Natural killer cell (primary cell): ENCODE measurements at regions of chr22 and their contacts with region 1.

Region 1: DNA sequence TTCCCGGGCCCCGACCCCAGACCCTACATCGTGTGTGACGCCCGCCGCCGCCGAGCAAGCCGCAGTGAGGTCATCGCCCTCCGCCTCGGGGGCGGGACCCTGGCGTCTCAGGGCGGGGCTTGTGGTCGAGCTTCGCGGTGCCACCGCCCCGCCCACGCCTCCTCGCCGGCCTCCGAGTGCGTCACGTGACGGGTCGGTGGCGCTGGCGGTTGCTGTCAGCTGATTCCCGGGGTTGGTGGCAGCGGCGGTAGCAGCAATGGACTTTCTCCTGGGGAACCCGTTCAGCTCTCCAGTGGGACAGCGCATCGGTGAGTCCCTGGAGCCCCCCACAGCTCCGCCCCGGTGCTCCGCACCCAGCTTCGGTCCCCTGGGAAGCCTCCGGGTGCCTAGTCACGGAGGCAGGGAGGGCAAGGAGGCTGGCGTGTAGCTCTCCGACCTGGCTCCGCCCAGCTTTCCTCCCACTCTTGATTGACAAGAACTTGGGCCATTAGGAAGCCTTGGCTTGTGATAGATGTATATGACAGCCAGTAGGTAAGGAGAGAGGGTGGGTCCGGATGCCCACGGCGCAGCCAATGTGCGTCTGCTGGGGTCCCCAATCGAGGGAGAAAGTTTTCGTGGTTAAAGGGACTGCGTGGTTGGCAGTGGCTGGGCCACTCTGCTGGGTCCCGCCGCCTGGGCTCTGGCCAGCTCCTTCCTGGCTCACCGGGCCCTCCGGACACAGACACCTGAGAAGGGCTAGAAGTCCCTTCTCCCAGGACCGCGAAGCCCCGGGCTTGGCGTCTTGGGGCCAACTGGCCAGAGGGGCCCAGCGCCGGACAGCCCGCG is at the start of gene TOM1:
- DNase-seq: peak; percentile 98
- ATAC-seq: peak; percentile 86 to 96 (median 89)
- H3K4me3 ChIP-seq: peak within 1 kb of the TSS; percentile 82
- H3K4me3 Mint-ChIP-seq: peak within 1 kb of the TSS; percentile 99
- H3K27ac ChIP-seq: peak within 1 kb of the TSS; percentile 94
- H3K27ac Mint-ChIP-seq: peak within 1 kb of the TSS; percentile 96 to 99
- H3K4me1 ChIP-seq: peaks cover 21% of the 10 kb centered on the region
- H3K4me1 Mint-ChIP-seq: peaks cover 14 to 25% of the 10 kb centered on the region in 2 donors
- H3K27me3 ChIP-seq: no peaks in the 10 kb centered on the region
- H3K27me3 Mint-ChIP-seq: no peaks in the 10 kb centered on the region
- CTCF ChIP-seq: no peak
- total RNA-seq, gene TOM1: 102 to 132 (median 107) TPM

Region 2: DNA sequence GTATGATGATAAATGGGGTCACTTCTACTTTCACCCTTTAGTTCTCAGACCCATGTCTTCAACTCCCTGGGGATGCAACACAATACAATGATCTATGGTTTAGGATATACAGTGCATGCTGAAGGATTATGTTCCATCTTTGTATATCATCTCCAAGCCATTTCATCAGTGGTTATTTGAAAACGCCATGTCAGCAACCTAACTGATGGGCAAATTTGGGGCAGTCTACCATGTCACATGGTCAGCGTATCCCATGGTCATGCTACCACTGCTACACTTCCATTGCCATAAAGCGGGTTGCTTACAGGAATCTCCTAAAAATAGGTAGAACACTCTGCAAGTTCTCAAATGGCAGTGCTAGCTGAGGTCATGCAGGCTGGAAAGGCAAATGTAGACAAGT is 470.4 kb before region 1 on chr22:
- intact Hi-C with region 1: no loop called
- DNase-seq: no peak
- ATAC-seq: no peak
- H3K4me3 ChIP-seq: no peak overlapping the region
- H3K4me3 Mint-ChIP-seq: no peak overlapping the region
- H3K27ac ChIP-seq: no peak overlapping the region
- H3K27ac Mint-ChIP-seq: no peak overlapping the region
- H3K4me1 ChIP-seq: no peaks in the 10 kb centered on the region
- H3K4me1 Mint-ChIP-seq: no peaks in the 10 kb centered on the region
- H3K27me3 ChIP-seq: no peaks in the 10 kb centered on the region
- H3K27me3 Mint-ChIP-seq: no peaks in the 10 kb centered on the region
- CTCF ChIP-seq: no peak

Region 3: DNA sequence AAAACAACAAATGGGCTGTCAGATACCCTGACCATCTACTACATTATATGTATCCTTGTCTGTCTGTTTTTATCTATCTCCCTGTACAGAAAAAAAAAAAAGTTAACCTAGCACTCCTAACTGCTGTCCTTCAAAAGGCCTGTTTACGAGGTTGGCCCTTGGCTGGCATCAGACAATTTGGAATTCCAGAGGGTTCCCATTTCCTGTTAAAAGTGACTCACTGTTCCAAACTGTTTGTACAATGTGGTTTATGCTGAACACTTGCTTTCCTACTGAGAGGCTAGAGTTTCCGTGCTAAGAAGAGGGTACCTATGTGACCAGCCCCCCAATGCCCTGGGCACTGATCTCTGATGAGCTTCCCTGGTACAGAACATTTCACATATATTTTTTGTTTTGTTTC is 108.5 kb before region 1 on chr22:
- intact Hi-C with region 1: no loop called
- DNase-seq: no peak
- ATAC-seq: no peak
- H3K4me3 ChIP-seq: no peak overlapping the region
- H3K4me3 Mint-ChIP-seq: no peak overlapping the region
- H3K27ac ChIP-seq: no peak overlapping the region
- H3K27ac Mint-ChIP-seq: no peak overlapping the region
- H3K4me1 ChIP-seq: no peaks in the 10 kb centered on the region
- H3K4me1 Mint-ChIP-seq: no peaks in the 10 kb centered on the region
- H3K27me3 ChIP-seq: no peaks in the 10 kb centered on the region
- H3K27me3 Mint-ChIP-seq: peaks cover 2 to 13% of the 10 kb centered on the region in 2 donors
- CTCF ChIP-seq: no peak

Region 4: GRCh38 chr22:35257321-35258190 is 42.3 kb before region 1 on chr22 and contains the start of gene HMGXB4:
- intact Hi-C with region 1: loop called (anchors 1 kb)
- DNase-seq: peak; percentile 82 to 95
- ATAC-seq: peak; percentile 92 to 96 (median 92)
- H3K4me3 ChIP-seq: peak within 1 kb of the TSS; percentile 72
- H3K4me3 Mint-ChIP-seq: peak within 1 kb of the TSS; percentile 94
- H3K27ac ChIP-seq: peak within 1 kb of the TSS; percentile 78
- H3K27ac Mint-ChIP-seq: peak within 1 kb of the TSS; percentile 91
- H3K4me1 ChIP-seq: peaks cover 9% of the 10 kb centered on the region
- H3K4me1 Mint-ChIP-seq: peaks cover 19 to 21% of the 10 kb centered on the region in 2 donors
- H3K27me3 ChIP-seq: no peaks in the 10 kb centered on the region
- H3K27me3 Mint-ChIP-seq: no peaks in the 10 kb centered on the region
- CTCF ChIP-seq: peak; percentile 21
- total RNA-seq, gene HMGXB4: 40.4 to 46.1 (median 40.7) TPM

Region 5: GRCh38 chr22:35380547-35381423 is 80.9 kb after region 1 on chr22 and contains the start of gene HMOX1:
- intact Hi-C with region 1: loop called (anchors 10 kb)
- DNase-seq: peak; percentile 64 to 70
- ATAC-seq: peak; percentile 90 to 95 (median 91)
- H3K4me3 ChIP-seq: peak within 1 kb of the TSS; percentile 31
- H3K4me3 Mint-ChIP-seq: peak within 1 kb of the TSS; percentile 86
- H3K27ac ChIP-seq: peak within 1 kb of the TSS; percentile 5
- H3K27ac Mint-ChIP-seq: peak within 1 kb of the TSS; percentile 70 to 74
- H3K4me1 ChIP-seq: peaks cover 34% of the 10 kb centered on the region
- H3K4me1 Mint-ChIP-seq: peaks cover 25 to 34% of the 10 kb centered on the region in 2 donors
- H3K27me3 ChIP-seq: no peaks in the 10 kb centered on the region
- H3K27me3 Mint-ChIP-seq: no peaks in the 10 kb centered on the region
- CTCF ChIP-seq: no peak
- total RNA-seq, gene HMOX1: 7.5 to 61.6 (median 15.9) TPM

Region 6: GRCh38 chr22:35840302-35840739 is 540.4 kb after region 1 on chr22:
- intact Hi-C with region 1: no loop called
- DNase-seq: peak in 1 of 2 donors; percentile 17
- ATAC-seq: no peak
- H3K4me3 ChIP-seq: no peak overlapping the region
- H3K4me3 Mint-ChIP-seq: no peak overlapping the region
- H3K27ac ChIP-seq: no peak overlapping the region
- H3K27ac Mint-ChIP-seq: no peak overlapping the region
- H3K4me1 ChIP-seq: no peaks in the 10 kb centered on the region
- H3K4me1 Mint-ChIP-seq: peaks cover 4 to 5% of the 10 kb centered on the region in 2 donors
- H3K27me3 ChIP-seq: peaks cover 2% of the 10 kb centered on the region
- H3K27me3 Mint-ChIP-seq: peaks cover 17 to 31% of the 10 kb centered on the region in 2 donors
- CTCF ChIP-seq: no peak